Activated CD4-positive, alpha-beta T cell treated with anti-CD3 and anti-CD28 coated beads for 36 hours (primary cell): ENCODE measurements at regions of chr2 and their contacts with region 1.

Region 1: GRCh38 chr2:187581125-187581896 is 27.1 kb upstream of the TFPI start:
- DNase-seq: peak; percentile 25
- ATAC-seq: no peak
- H3K4me3 Mint-ChIP-seq: no peak overlapping the region
- H3K27ac Mint-ChIP-seq: no peak overlapping the region
- H3K4me1 Mint-ChIP-seq: peaks cover 15% of the 10 kb centered on the region
- H3K27me3 Mint-ChIP-seq: peaks cover 3% of the 10 kb centered on the region

Region 2: DNA sequence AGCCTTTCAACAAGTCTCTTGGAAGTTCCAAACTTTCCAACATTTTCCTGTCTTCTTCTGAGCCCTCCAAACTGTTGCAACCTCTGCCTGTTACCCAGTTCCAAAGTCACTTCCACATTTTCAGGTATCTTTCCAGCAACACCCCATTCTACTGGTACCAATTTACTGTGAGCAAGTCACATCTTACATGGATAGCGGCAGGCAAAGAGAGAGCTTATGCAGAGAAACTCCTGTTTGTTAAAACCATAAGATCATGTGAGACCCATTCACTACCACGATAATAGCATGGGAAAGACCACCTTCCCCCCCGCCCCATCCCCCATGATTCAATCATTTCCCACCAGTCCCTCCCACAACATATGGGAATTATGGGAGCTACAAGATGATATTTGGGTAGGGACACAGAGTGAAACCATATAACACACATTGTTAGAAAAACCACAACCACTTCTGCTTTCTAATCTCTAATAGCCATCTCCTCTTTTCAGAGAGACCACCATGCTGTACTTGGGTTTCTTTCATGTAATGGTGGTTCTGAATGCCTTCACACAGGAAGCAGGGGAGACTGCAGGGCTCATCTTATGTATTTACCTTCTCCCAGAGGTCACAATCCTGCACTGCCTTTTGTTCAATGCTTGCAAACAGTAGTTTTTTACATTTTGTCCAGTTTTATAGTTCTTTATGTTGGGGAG is 87.3 kb before region 1 on chr2:
- CTCF ChIA-PET with region 1: interaction called, 55 read pairs
- POLR2A ChIA-PET with region 1: no interaction called
- intact Hi-C with region 1: no loop called
- DNase-seq: no peak
- ATAC-seq: no peak
- H3K4me3 Mint-ChIP-seq: no peak overlapping the region
- H3K27ac Mint-ChIP-seq: no peak overlapping the region
- H3K4me1 Mint-ChIP-seq: no peaks in the 10 kb centered on the region
- H3K27me3 Mint-ChIP-seq: no peaks in the 10 kb centered on the region

Region 3: DNA sequence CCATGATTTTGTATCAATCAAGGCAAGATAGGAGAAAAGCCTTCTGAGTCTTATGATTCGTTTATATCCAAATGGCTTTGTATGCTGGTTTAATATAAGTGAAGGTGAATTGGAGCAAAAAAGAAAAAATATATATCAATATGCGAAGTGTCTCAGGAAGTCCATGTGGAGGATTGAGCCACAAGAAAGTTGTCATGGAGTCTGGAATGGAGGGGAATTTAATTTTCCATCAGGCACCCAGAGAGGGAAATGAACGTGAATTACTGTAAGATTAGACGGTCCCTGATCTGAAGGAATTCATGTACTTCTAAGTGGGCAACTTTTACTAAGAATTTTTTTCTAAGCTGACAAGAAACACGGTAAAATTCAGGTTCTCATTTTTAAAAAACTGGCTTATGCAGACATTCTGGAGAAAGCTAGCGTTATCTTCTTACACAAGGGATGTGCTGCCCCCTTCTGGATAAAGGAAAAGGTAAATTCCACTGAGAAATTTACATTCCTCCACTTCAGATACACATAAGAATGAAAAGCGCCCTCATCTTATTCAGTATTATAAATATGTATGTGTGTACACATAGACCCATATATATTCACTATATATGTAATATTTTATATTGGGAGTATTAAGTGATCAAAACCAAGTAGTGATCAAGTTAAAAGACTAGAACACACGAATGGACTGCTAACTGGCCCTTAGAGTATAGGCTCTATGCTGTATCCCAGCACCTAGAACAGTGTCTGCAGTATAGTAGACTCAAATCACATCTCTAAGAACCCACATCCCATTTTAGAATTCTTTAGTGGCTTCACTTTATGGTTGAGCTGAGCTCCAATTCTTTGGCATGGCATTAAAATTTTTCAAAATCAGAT is 261.9 kb after region 1 on chr2:
- CTCF ChIA-PET with region 1: interaction called, 14 read pairs
- POLR2A ChIA-PET with region 1: no interaction called
- intact Hi-C with region 1: loop called (anchors 1 kb)
- DNase-seq: no peak
- ATAC-seq: no peak
- H3K4me3 Mint-ChIP-seq: no peak overlapping the region
- H3K27ac Mint-ChIP-seq: no peak overlapping the region
- H3K4me1 Mint-ChIP-seq: no peaks in the 10 kb centered on the region
- H3K27me3 Mint-ChIP-seq: no peaks in the 10 kb centered on the region

Region 4: DNA sequence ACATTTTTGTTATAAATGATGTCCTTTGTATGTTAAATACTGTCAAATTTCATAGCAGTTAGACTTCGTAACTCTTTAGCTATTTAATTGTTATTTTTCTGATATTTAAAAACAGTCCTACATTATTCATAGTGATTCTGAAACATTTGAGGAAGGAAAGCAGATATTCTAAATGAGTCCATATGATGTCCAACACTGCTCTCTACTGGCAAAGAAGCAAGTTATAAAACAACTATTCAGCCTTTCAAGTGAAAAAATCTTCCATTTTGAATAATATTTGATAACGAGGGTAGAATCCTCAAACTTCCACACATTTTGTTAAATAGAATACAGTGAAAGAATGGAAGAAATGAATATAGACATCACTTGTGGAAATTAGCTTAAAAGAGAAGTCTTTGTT is 931.1 kb after region 1 on chr2:
- CTCF ChIA-PET with region 1: no interaction called
- POLR2A ChIA-PET with region 1: no interaction called
- intact Hi-C with region 1: loop called (anchors 5 to 10 kb)
- DNase-seq: no peak
- ATAC-seq: peak; percentile 30
- H3K4me3 Mint-ChIP-seq: no peak overlapping the region
- H3K27ac Mint-ChIP-seq: no peak overlapping the region
- H3K4me1 Mint-ChIP-seq: no peaks in the 10 kb centered on the region
- H3K27me3 Mint-ChIP-seq: no peaks in the 10 kb centered on the region

Region 5: GRCh38 chr2:189412330-189412953 is 1831.1 kb after region 1 on chr2:
- CTCF ChIA-PET with region 1: no interaction called
- POLR2A ChIA-PET with region 1: no interaction called
- intact Hi-C with region 1: loop called in 1 of 2 experiments (anchors 10 kb)
- DNase-seq: peak; percentile 63
- ATAC-seq: no peak
- H3K4me3 Mint-ChIP-seq: no peak overlapping the region
- H3K27ac Mint-ChIP-seq: no peak overlapping the region
- H3K4me1 Mint-ChIP-seq: peaks cover 14% of the 10 kb centered on the region
- H3K27me3 Mint-ChIP-seq: no peaks in the 10 kb centered on the region